Activated CD8-positive, alpha-beta T cell treated with anti-CD3 and anti-CD28 coated beads, Interleukin-2, amount 10 ng/mL, durations not matched to agents 7 days and 5 days (primary cell): ENCODE measurements at regions of chr2 and their contacts with region 1.

Region 1: DNA sequence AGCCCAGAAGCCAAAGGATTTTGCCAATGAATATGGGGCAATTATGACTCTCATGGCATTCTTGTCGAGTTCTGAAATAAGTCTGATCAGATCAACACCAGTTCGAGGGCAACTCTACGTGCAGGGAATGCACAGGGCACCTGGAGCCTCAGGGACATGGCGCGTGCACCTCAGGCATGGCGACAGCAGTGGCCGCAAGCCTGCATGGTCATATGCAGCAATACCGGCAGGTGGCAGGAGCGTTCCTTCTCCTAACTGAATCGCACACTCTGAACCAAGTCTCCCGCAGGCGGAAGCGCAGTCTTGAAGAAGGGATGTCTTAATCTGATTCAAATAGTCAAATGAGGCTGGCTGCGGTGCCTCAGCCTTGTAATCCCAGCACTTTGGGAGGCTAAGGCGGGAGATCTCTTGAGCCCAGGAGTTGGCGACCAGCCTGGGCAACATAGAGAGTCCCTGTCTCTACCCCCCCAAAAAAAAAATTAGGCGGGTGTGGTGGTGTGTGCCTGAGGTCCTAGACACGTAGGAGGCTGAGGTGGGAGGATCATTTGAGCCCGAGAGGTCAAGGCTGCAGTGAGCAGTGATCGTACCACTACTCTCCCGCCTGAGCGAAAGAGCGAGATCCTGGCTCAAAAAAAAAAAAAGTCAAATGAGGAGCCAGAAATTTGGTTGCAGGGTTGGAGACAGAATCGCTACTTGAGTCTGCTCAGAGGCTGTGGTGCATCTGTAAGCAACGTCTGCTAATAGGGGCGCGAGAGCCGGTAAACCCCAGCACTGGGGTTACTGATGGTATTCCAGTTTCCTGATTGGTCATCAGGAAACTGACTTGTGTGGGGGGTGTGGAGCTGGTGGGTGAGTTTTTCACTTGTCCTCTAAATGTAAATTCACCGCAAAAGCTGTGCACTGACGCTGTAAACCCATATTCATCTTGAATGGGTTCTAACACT is 28.8 kb downstream of the FHL2 start:
- DNase-seq: peak; percentile 92
- ATAC-seq: peak; percentile 98
- H3K4me3 Mint-ChIP-seq: no peak overlapping the region
- H3K27ac Mint-ChIP-seq: no peak overlapping the region
- H3K4me1 Mint-ChIP-seq: peaks cover 15% of the 10 kb centered on the region
- H3K27me3 Mint-ChIP-seq: no peaks in the 10 kb centered on the region

Region 2: DNA sequence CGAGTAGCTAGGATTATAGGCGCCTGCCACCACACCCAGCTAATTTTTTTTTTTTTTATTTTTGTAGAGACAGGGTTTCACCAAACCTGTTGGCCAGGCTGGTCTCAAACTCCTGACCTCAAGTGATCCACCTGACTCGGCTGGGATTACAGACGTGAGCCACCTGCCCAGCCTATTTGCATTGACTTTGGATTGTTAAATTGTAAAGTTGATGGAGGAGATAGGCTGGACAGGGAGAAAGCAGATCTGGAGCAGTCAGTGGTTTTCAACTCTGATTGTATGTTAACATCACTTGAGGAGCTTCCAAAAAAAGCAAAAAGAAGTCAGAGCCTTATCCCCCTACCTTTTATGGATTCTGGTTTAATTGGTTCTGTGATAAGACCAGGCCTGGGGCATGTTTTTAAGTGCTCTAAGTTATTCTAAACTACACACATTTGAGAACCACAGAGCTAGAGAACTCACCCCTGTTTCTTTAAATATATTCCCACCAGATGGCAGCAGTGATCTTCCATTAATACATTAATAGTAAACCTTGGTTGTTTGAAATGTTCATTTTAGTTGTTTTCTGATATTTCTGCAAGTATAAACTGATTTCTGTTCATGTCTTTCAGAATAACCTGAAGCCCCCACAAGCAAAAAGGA is 25.2 kb before region 1 on chr2:
- CTCF ChIA-PET with region 1: interaction called, 11 read pairs
- POLR2A ChIA-PET with region 1: no interaction called
- DNase-seq: no peak
- ATAC-seq: no peak
- H3K4me3 Mint-ChIP-seq: no peak overlapping the region
- H3K27ac Mint-ChIP-seq: no peak overlapping the region
- H3K4me1 Mint-ChIP-seq: no peaks in the 10 kb centered on the region
- H3K27me3 Mint-ChIP-seq: no peaks in the 10 kb centered on the region

Region 3: DNA sequence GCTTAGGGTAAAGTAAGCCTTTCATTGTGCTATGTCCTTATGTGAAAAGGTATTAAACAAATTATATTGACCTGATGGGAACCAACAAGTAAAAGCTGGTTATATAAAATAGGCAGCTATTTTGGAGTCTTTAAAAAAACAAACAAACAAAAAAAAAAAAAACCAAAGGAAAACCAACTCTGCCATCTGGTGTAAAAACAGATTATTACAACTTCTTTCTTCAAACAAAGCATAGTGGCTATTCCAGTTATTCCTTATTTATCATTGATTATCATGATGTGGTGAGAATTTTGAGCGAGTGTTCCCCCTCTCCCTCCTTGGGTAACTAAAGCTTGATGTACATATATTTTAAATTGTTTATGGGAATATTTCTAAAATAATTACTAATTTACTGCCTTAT is 151.2 kb after region 1 on chr2:
- CTCF ChIA-PET with region 1: interaction called, 51 read pairs
- POLR2A ChIA-PET with region 1: no interaction called
- DNase-seq: no peak
- ATAC-seq: no peak
- H3K4me3 Mint-ChIP-seq: no peak overlapping the region
- H3K27ac Mint-ChIP-seq: no peak overlapping the region
- H3K4me1 Mint-ChIP-seq: no peaks in the 10 kb centered on the region
- H3K27me3 Mint-ChIP-seq: no peaks in the 10 kb centered on the region